CD8-positive, alpha-beta T cell (primary cell): ENCODE measurements at regions of chr1 and their contacts with region 1.

Region 1: GRCh38 chr1:201989354-201990128 is 7.1 kb downstream of the RNPEP start:
- DNase-seq: no peak
- ATAC-seq: no peak
- H3K4me3 ChIP-seq: no peak overlapping the region
- H3K4me3 Mint-ChIP-seq: no peak overlapping the region
- H3K27ac ChIP-seq: no peak overlapping the region
- H3K27ac Mint-ChIP-seq: no peak overlapping the region
- H3K4me1 ChIP-seq: no peaks in the 10 kb centered on the region
- H3K4me1 Mint-ChIP-seq: peaks cover 11% of the 10 kb centered on the region
- H3K27me3 ChIP-seq: no peaks in the 10 kb centered on the region
- H3K27me3 Mint-ChIP-seq: no peaks in the 10 kb centered on the region
- CTCF ChIP-seq: no peak

Region 2: GRCh38 chr1:201999625-202000238 is 10.2 kb after region 1 on chr1:
- CTCF ChIA-PET with region 1: interaction called, 31 read pairs
- POLR2A ChIA-PET with region 1: no interaction called
- intact Hi-C with region 1: no loop called
- DNase-seq: peak in 4 of 9 experiments; percentile 10 to 58 (median 34)
- ATAC-seq: peak; percentile 83
- H3K4me3 ChIP-seq: no peak overlapping the region
- H3K4me3 Mint-ChIP-seq: no peak overlapping the region
- H3K27ac ChIP-seq: no peak overlapping the region
- H3K27ac Mint-ChIP-seq: no peak overlapping the region
- H3K4me1 ChIP-seq: no peaks in the 10 kb centered on the region
- H3K4me1 Mint-ChIP-seq: no peaks in the 10 kb centered on the region
- H3K27me3 ChIP-seq: no peaks in the 10 kb centered on the region
- H3K27me3 Mint-ChIP-seq: no peaks in the 10 kb centered on the region
- CTCF ChIP-seq: peak; percentile 71